ENCODE measurements at regions of chr2 and their contacts with region 1.

Region 1: GRCh38 chr2:101844055-101844635 is 146.6 kb downstream of the MAP4K4 start:
- DNase-seq: no peak
- ATAC-seq: no peak
- H3K4me3 ChIP-seq: no peak overlapping the region
- H3K4me3 Mint-ChIP-seq: no peak overlapping the region
- H3K27ac ChIP-seq: no peak overlapping the region
- H3K27ac Mint-ChIP-seq: no peak overlapping the region
- H3K4me1 ChIP-seq: peaks cover 6% of the 10 kb centered on the region
- H3K4me1 Mint-ChIP-seq: peaks cover 15 to 20% of the 10 kb centered on the region in 2 donors
- H3K27me3 ChIP-seq: no peaks in the 10 kb centered on the region
- H3K27me3 Mint-ChIP-seq: no peaks in the 10 kb centered on the region
- CTCF ChIP-seq: no peak

Region 2: GRCh38 chr2:101883863-101884262 is 39.7 kb after region 1 on chr2:
- intact Hi-C with region 1: loop called (anchors 1 kb)
- DNase-seq: peak in 1 of 2 donors; percentile 65
- ATAC-seq: peak; percentile 81 to 85 (median 81)
- H3K4me3 ChIP-seq: no peak overlapping the region
- H3K4me3 Mint-ChIP-seq: no peak overlapping the region
- H3K27ac ChIP-seq: no peak overlapping the region
- H3K27ac Mint-ChIP-seq: no peak overlapping the region
- H3K4me1 ChIP-seq: no peaks in the 10 kb centered on the region
- H3K4me1 Mint-ChIP-seq: no peaks in the 10 kb centered on the region
- H3K27me3 ChIP-seq: no peaks in the 10 kb centered on the region
- H3K27me3 Mint-ChIP-seq: no peaks in the 10 kb centered on the region
- CTCF ChIP-seq: peak; percentile 66

Measured in natural killer cell (primary cell).